ENCODE measurements at regions of chr12 and their contacts with region 1.

Region 1: GRCh38 chr12:30985814-30986452 is 59.4 kb downstream of the TSPAN11 start:
- DNase-seq: no peak
- H3K4me3 ChIP-seq: no peak overlapping the region
- H3K27ac ChIP-seq: no peak overlapping the region
- H3K27me3 ChIP-seq: peaks cover 10% of the 10 kb centered on the region
- CTCF ChIP-seq: peak; percentile 92

Region 2: GRCh38 chr12:30525171-30525570 is 460.8 kb before region 1 on chr12:
- CTCF ChIA-PET with region 1: no interaction called
- POLR2A ChIA-PET with region 1: no interaction called
- DNase-seq: no peak
- H3K4me3 ChIP-seq: no peak overlapping the region
- H3K27ac ChIP-seq: no peak overlapping the region
- H3K27me3 ChIP-seq: no peaks in the 10 kb centered on the region
- CTCF ChIP-seq: no peak

Region 3: DNA sequence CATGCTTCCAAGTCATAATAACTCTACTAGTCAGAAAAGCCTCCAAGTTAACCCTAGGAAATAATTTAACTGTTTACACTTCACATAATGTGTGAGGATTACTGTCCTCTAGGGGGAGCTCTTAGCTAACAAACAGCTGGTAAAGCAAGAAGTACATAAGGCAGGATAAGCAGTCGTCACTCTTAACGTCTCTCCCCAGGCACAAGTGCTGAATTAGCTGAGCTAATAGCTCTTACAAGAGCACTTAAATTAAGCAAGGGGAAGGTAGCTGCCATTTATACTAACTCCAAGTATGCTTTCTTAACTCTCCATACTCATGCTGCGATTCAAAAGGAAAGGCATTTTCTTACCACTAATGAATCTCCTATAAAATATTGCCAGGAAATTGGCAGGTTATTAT is 138.7 kb before region 1 on chr12:
- CTCF ChIA-PET with region 1: interaction called, 185 read pairs
- POLR2A ChIA-PET with region 1: no interaction called
- DNase-seq: peak; percentile 8
- H3K4me3 ChIP-seq: no peak overlapping the region
- H3K27ac ChIP-seq: no peak overlapping the region
- H3K27me3 ChIP-seq: peaks cover 3% of the 10 kb centered on the region
- CTCF ChIP-seq: peak; percentile 71

Region 4: GRCh38 chr12:30882706-30883105 is 103.2 kb before region 1 on chr12:
- CTCF ChIA-PET with region 1: interaction called, 17 read pairs
- POLR2A ChIA-PET with region 1: no interaction called
- DNase-seq: no peak
- H3K4me3 ChIP-seq: no peak overlapping the region
- H3K27ac ChIP-seq: no peak overlapping the region
- H3K27me3 ChIP-seq: peaks cover 15% of the 10 kb centered on the region
- CTCF ChIP-seq: no peak

Region 5: DNA sequence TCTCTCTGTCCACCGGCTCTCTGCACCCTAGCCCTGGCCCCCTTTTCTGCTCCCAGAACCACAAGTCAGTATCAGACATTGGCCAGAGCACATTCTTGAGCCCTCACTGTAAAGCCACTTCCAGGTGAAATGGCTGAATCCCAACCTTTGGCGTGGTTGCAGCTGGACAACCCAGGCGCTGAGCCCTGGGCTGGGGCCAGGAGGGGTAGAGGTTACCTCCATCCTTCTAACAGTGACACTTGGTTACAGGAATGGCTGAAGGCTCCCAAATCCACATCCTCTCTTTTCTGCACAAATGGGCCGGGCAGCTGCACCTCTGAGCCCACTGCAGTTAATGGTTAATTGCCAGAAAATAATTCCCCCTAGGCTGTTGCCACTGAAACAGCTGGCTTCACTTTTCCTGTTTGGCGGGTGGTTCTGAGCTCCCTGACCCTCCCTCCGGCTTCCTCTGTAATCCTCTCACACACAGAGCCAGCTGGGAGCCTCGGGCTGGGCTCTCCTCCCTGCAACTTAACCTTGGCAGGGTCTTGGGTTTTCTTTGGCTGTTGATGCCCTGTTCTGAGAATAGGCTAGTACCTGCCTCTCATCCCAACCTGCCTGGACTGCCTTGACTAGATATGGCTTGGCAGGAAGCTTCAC is 15.3 kb before region 1 on chr12:
- CTCF ChIA-PET with region 1: interaction called, 12 read pairs
- POLR2A ChIA-PET with region 1: no interaction called
- DNase-seq: no peak
- H3K4me3 ChIP-seq: no peak overlapping the region
- H3K27ac ChIP-seq: no peak overlapping the region
- H3K27me3 ChIP-seq: peaks cover 17% of the 10 kb centered on the region
- CTCF ChIP-seq: no peak

Region 6: GRCh38 chr12:30996255-30996654 is 10.3 kb after region 1 on chr12:
- CTCF ChIA-PET with region 1: interaction called, 15 read pairs
- POLR2A ChIA-PET with region 1: no interaction called
- DNase-seq: peak; percentile 63
- H3K4me3 ChIP-seq: no peak overlapping the region
- H3K27ac ChIP-seq: no peak overlapping the region
- H3K27me3 ChIP-seq: peaks cover 2% of the 10 kb centered on the region
- CTCF ChIP-seq: no peak

Region 7: GRCh38 chr12:31021809-31022494 is 36.0 kb after region 1 on chr12:
- CTCF ChIA-PET with region 1: interaction called, 11 read pairs
- POLR2A ChIA-PET with region 1: no interaction called
- DNase-seq: no peak
- H3K4me3 ChIP-seq: no peak overlapping the region
- H3K27ac ChIP-seq: no peak overlapping the region
- H3K27me3 ChIP-seq: peaks cover 7% of the 10 kb centered on the region
- CTCF ChIP-seq: no peak

Measured in AG04450 (cell line).